Activated CD4-positive, alpha-beta memory T cell treated with anti-CD3 and anti-CD28 coated beads, Interleukin-2, amount 10 ng/mL, durations not matched to agents 7 days and 5 days (primary cell): ENCODE measurements at regions of chr11 and their contacts with region 1.

Region 1: GRCh38 chr11:118002541-118003423 is 16.6 kb downstream of the IL10RA start:
- DNase-seq: peak; percentile 73
- H3K4me3 Mint-ChIP-seq: peak overlapping the region; percentile 58
- H3K27ac Mint-ChIP-seq: peak overlapping the region; percentile 99
- H3K4me1 Mint-ChIP-seq: peaks cover 100% of the 10 kb centered on the region
- H3K27me3 Mint-ChIP-seq: no peaks in the 10 kb centered on the region

Region 2: GRCh38 chr11:117817368-117818040 is 185.3 kb before region 1 on chr11:
- CTCF ChIA-PET with region 1: interaction called, 4 read pairs
- POLR2A ChIA-PET with region 1: interaction called, 25 read pairs
- DNase-seq: peak; percentile 89
- H3K4me3 Mint-ChIP-seq: no peak overlapping the region
- H3K27ac Mint-ChIP-seq: peak overlapping the region; percentile 73
- H3K4me1 Mint-ChIP-seq: peaks cover 65% of the 10 kb centered on the region
- H3K27me3 Mint-ChIP-seq: no peaks in the 10 kb centered on the region

Region 3: DNA sequence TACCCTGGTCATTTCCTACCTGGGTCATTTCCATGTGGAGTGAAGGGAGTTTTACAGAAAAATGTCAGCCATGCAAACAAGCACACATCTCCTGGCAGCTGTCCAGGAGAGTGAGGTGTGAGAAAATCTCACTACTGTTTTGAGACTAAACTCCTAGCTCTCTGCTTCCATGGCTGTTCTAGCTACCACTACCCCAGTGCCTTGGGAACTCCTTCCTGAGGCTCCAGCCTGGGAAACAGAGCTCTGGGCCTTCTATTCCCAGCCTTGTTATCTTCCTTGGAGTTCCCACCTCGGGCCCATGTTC is 70.8 kb before region 1 on chr11:
- CTCF ChIA-PET with region 1: no interaction called
- POLR2A ChIA-PET with region 1: interaction called, 10 read pairs
- DNase-seq: peak; percentile 39
- H3K4me3 Mint-ChIP-seq: no peak overlapping the region
- H3K27ac Mint-ChIP-seq: peak overlapping the region; percentile 29
- H3K4me1 Mint-ChIP-seq: peaks cover 61% of the 10 kb centered on the region
- H3K27me3 Mint-ChIP-seq: peaks cover 14% of the 10 kb centered on the region

Region 4: GRCh38 chr11:118046051-118046963 is 43.5 kb after region 1 on chr11:
- CTCF ChIA-PET with region 1: interaction called, 192 read pairs
- POLR2A ChIA-PET with region 1: interaction called, 681 read pairs
- DNase-seq: peak; percentile 44
- H3K4me3 Mint-ChIP-seq: no peak overlapping the region
- H3K27ac Mint-ChIP-seq: peak overlapping the region; percentile 78
- H3K4me1 Mint-ChIP-seq: peaks cover 90% of the 10 kb centered on the region
- H3K27me3 Mint-ChIP-seq: no peaks in the 10 kb centered on the region

Region 5: DNA sequence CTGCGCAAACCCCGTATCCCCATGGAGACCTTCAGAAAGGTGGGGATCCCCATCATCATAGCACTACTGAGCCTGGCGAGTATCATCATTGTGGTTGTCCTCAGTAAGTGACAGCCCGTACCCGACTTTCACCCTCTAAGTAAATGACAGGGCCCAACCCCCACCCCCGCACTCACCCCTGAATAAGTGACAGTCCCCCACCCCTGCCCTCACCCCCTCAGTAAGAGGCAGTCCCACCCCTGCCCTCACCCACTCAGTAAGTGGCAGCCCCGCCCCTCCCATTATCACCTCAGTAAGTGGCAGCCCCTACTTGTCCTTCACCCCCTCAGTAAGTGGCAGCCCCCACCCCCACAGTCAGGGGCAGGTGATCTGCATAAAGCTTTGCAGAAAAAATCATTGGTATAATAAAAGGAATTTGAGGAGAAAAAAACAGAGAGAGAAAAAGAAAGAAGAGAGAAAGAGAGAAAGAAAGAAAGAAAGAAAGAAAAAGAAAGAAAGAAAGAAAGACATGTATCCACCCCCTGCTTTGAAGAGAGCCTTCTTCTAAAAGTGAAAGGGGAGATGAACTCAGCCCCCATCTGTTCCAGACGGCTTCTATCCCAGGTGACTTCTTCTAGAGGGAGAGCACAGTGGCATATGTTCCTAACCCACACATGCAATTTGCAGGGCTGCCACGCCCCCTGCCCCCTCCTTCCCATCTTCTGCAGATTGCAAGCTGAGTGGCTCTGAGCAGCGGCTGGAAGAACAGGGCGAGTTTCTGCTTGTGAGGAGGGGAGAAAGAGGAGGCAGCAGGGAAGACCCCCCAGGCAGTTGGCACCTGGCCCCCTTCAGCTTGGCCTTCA is 96.4 kb after region 1 on chr11:
- CTCF ChIA-PET with region 1: no interaction called
- POLR2A ChIA-PET with region 1: no interaction called
- DNase-seq: no peak
- H3K4me3 Mint-ChIP-seq: no peak overlapping the region
- H3K27ac Mint-ChIP-seq: no peak overlapping the region
- H3K4me1 Mint-ChIP-seq: no peaks in the 10 kb centered on the region
- H3K27me3 Mint-ChIP-seq: peaks cover 9% of the 10 kb centered on the region